Activated CD4-positive, alpha-beta T cell treated with anti-CD3 and anti-CD28 coated beads, Interleukin-2, amount 10 ng/mL, durations not matched to agents 24 days and 14 days (primary cell): ENCODE measurements at regions of chr7 and their contacts with region 1.

Region 1: DNA sequence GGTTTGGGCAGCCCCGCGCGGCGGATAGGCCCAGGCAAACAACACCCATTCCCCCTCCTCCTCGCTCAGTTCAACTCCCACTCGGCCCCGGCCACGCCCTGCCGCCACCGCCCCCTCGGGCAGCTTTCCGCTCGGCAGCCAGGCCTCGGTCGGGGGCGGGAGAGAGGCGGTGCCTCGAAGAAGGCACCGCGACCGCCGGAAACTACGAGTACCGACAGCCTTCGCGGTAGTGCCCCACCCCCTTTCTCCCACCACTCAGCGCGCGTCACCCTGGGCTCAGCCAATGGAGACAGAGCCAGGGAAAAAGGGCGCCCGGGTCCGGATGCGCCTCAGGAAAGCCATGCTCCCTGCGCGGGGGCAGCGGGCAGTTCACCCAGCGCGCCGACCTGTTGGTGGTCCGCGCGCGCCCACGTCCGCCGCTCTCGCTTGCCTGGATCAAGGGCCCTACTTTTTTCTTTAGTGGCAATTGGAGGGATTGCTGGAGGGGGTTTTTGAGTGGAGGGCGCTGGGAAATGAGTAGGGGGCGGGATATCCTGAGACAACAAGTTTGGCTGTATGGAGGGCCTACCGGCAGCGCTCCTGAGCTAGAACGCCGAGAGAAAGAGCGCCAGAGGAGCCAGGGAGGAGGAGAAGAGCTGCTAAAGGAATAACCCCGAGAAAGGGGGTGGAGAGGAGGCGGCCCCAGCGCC is 557 bp upstream of the SP4 start:
- DNase-seq: peak; percentile 100
- H3K4me3 Mint-ChIP-seq: peak overlapping the region; percentile 96
- H3K27ac Mint-ChIP-seq: peak overlapping the region; percentile 100
- H3K4me1 Mint-ChIP-seq: peaks cover 36% of the 10 kb centered on the region
- H3K27me3 Mint-ChIP-seq: no peaks in the 10 kb centered on the region

Region 2: GRCh38 chr7:21054427-21055112 is 372.8 kb before region 1 on chr7:
- intact Hi-C with region 1: no loop called
- DNase-seq: no peak
- H3K4me3 Mint-ChIP-seq: no peak overlapping the region
- H3K27ac Mint-ChIP-seq: no peak overlapping the region
- H3K4me1 Mint-ChIP-seq: no peaks in the 10 kb centered on the region
- H3K27me3 Mint-ChIP-seq: no peaks in the 10 kb centered on the region

Region 3: GRCh38 chr7:21261627-21262594 is 165.4 kb before region 1 on chr7:
- intact Hi-C with region 1: loop called (anchors 2 kb)
- DNase-seq: peak; percentile 80
- H3K4me3 Mint-ChIP-seq: no peak overlapping the region
- H3K27ac Mint-ChIP-seq: no peak overlapping the region
- H3K4me1 Mint-ChIP-seq: peaks cover 7% of the 10 kb centered on the region
- H3K27me3 Mint-ChIP-seq: no peaks in the 10 kb centered on the region

Region 4: GRCh38 chr7:21355406-21355874 is 71.9 kb before region 1 on chr7:
- intact Hi-C with region 1: loop called (anchors 1 kb)
- DNase-seq: peak; percentile 90
- H3K4me3 Mint-ChIP-seq: peak overlapping the region; percentile 77
- H3K27ac Mint-ChIP-seq: peak overlapping the region; percentile 97
- H3K4me1 Mint-ChIP-seq: peaks cover 76% of the 10 kb centered on the region
- H3K27me3 Mint-ChIP-seq: no peaks in the 10 kb centered on the region

Region 5: DNA sequence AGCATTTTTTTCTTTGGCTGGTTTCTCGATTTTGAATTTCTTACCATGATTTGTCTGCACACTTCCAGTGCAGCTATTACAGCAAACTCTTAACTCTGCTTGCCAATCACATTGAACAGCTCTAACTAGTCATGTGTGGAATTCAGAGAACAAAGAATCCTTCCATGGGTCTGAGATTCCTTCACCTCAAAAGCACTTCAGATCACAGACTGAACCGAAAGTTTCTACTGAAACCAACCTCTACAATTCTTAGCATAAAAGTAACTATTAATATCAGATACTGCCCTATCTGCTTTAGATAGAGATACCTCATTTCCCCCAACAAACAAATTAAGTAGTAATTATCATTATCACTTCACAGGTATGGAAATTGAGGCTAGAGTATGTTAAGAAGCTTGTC is 56.0 kb before region 1 on chr7:
- intact Hi-C with region 1: no loop called
- DNase-seq: peak; percentile 42
- H3K4me3 Mint-ChIP-seq: no peak overlapping the region
- H3K27ac Mint-ChIP-seq: no peak overlapping the region
- H3K4me1 Mint-ChIP-seq: peaks cover 26% of the 10 kb centered on the region
- H3K27me3 Mint-ChIP-seq: no peaks in the 10 kb centered on the region

Region 6: DNA sequence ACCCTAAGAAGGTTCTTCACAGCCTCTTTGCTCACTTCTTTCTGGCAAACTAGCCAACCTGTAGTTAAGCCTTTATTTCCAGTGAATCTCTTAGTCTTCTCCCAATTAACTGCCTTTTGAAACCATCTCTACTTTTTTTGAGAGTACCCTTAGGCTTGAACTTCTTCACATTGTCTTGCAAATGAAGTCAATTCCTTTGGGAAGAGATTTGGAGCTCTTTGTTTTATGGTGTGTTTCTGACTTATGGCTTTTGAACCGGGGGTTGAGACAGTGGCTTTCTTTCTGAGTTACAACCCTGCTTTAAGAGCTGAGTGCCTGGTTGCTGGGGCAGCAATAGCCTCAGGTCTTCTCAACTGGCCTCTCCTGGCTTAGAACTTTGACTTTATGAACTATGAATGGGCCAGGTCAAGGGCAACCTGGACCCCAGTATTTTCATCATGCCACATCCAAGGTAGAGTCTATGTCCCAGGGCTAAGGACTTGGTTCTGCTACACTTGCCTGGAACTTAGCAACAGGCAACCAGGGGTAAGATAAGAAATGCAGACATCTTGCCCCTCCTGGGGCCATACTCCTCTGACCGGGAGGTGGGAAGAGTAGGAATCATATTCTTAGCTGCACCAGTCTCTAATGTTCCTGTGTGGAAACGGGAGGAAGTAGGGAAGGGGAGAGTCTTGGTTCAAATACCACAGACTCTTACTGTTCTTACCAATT is 53.5 kb after region 1 on chr7:
- intact Hi-C with region 1: loop called (anchors 5 kb)
- DNase-seq: no peak
- H3K4me3 Mint-ChIP-seq: no peak overlapping the region
- H3K27ac Mint-ChIP-seq: peak overlapping the region; percentile 51
- H3K4me1 Mint-ChIP-seq: peaks cover 19% of the 10 kb centered on the region
- H3K27me3 Mint-ChIP-seq: no peaks in the 10 kb centered on the region

Region 7: GRCh38 chr7:21767300-21767900 is 340.1 kb after region 1 on chr7:
- intact Hi-C with region 1: loop called (anchors 10 kb)
- DNase-seq: peak; percentile 79
- H3K4me3 Mint-ChIP-seq: no peak overlapping the region
- H3K27ac Mint-ChIP-seq: no peak overlapping the region
- H3K4me1 Mint-ChIP-seq: peaks cover 18% of the 10 kb centered on the region
- H3K27me3 Mint-ChIP-seq: peaks cover 14% of the 10 kb centered on the region

Region 8: GRCh38 chr7:22001345-22002004 is 574.1 kb after region 1 on chr7:
- intact Hi-C with region 1: loop called (anchors 5 kb)
- DNase-seq: peak; percentile 83
- H3K4me3 Mint-ChIP-seq: peak overlapping the region; percentile 29
- H3K27ac Mint-ChIP-seq: no peak overlapping the region
- H3K4me1 Mint-ChIP-seq: peaks cover 2% of the 10 kb centered on the region
- H3K27me3 Mint-ChIP-seq: peaks cover 13% of the 10 kb centered on the region

Region 9: GRCh38 chr7:23181684-23182553 is 1754.6 kb after region 1 on chr7 and contains the start of gene NUP42:
- intact Hi-C with region 1: loop called (anchors 5 kb)
- DNase-seq: peak; percentile 99
- H3K4me3 Mint-ChIP-seq: peak within 1 kb of the TSS; percentile 94
- H3K27ac Mint-ChIP-seq: peak within 1 kb of the TSS; percentile 99
- H3K4me1 Mint-ChIP-seq: peaks cover 31% of the 10 kb centered on the region
- H3K27me3 Mint-ChIP-seq: peaks cover 7% of the 10 kb centered on the region
- total RNA-seq, gene NUP42: 51.9 and 60.9 TPM in 2 replicates